ENCODE measurements at regions of chrX and their contacts with region 1.

Region 1: DNA sequence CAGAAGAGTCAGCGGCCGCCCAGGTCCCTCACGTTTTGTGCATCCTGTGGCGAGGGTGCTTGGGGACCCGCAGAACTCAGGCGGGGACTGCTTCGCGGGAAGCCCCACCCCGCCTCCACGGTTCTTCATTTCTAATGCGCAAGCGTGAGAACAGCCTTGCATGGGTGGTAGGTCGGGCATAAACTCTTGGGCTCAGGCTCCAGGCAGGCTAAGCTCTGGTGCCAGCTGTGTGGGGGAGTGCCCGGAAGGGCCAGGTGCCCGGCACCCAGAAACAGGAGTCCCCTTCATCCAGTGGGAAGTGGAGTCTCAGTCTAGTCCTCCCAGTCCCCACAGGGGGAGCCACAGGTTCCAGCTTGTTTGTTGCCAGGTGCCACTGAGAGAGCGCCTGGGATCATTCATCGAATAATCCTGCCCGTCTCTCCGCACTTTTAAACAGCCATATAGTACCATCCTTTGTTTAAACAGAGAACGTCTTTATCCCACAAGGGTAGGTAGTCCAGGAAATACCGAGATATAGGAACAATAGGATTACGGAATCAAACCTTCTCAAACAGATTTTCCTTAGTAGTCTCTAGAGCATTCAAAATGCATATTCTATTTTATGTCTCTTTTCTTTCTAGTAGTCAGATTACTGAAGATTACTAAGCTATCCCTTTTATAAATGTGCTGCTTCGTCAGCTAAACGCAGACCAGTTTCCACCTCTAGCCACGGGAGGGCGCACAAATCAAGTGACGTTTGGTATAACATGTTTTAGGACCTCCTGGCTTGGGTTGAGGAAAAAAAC is 12.7 kb upstream of the RBBP7 start:
- DNase-seq: peak; percentile 61
- CTCF ChIP-seq: peak; percentile 69

Region 2: GRCh38 chrX:16826207-16826606 is 56.7 kb before region 1 on chrX:
- CTCF ChIA-PET with region 1: interaction called, 14 read pairs
- POLR2A ChIA-PET with region 1: no interaction called
- DNase-seq: peak; percentile 39
- CTCF ChIP-seq: no peak

Region 3: GRCh38 chrX:16848541-16848940 is 34.4 kb before region 1 on chrX:
- CTCF ChIA-PET with region 1: no interaction called
- POLR2A ChIA-PET with region 1: no interaction called
- DNase-seq: no peak
- CTCF ChIP-seq: no peak

Region 4: DNA sequence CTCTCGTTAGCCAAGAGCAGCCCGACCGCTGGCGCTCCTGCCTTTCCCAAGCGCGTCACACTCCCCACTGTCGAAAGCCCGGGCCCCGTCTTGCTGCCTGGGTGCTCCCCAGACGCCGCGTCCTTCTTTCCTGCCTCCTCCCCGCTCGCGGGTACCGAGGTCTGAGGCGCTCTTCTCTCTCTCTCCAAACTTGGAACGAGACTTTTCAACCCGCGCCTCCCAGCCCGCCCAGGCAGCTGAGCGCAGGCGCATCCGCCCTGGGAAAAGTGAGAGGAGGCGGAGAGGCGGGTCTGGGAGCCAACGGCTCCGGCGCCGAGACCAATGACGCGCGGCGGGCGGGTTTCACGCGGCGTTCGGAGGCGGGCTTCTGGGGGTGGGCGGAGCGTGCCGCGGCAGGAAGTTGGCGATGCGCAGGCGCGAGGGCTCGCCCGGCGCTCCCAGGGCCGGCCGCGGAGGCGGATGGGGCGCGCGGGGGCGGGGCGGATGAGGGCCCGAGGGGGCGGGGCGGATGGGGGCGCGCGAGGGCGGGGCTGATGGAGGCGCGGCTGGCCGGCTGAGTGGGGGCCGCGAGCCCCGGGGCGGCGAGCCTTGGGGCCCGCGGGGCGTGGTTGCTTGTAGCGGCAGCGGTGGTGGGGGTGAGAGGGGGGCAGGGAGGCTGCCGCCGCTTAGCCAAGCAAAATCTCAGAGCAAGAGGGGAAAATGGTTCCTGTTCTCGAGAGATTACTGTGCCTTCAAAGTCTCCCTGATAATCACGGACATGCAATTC is 12.6 kb before region 1 on chrX and contains the start of gene RBBP7:
- CTCF ChIA-PET with region 1: interaction called, 45 read pairs
- POLR2A ChIA-PET with region 1: interaction called, 3 read pairs
- DNase-seq: peak; percentile 95
- CTCF ChIP-seq: no peak

Region 5: GRCh38 chrX:17046478-17047097 is 163.7 kb after region 1 on chrX:
- CTCF ChIA-PET with region 1: interaction called, 37 read pairs
- POLR2A ChIA-PET with region 1: no interaction called
- DNase-seq: peak; percentile 43
- CTCF ChIP-seq: peak; percentile 68

Measured in GM10248 (cell line).